GM12878 (cell line): ENCODE measurements at regions of chr2 and their contacts with region 1.

Region 1: GRCh38 chr2:215931256-215931903 is 82.0 kb downstream of the MREG start:
- DNase-seq: no peak
- ATAC-seq: peak; percentile 97
- H3K4me3 ChIP-seq: no peak overlapping the region
- H3K27ac ChIP-seq: no peak overlapping the region
- H3K4me1 ChIP-seq: peaks cover 4% of the 10 kb centered on the region; the same call in 1 of the 2 replicates
- H3K27me3 ChIP-seq: no peaks in the 10 kb centered on the region
- CTCF ChIP-seq: peak; percentile 82 to 96 (median 93)
- EP300 ChIP-seq: no peak
- POLR2A ChIP-seq: no peak
- RAD21 ChIP-seq: peak; percentile 96

Region 2: DNA sequence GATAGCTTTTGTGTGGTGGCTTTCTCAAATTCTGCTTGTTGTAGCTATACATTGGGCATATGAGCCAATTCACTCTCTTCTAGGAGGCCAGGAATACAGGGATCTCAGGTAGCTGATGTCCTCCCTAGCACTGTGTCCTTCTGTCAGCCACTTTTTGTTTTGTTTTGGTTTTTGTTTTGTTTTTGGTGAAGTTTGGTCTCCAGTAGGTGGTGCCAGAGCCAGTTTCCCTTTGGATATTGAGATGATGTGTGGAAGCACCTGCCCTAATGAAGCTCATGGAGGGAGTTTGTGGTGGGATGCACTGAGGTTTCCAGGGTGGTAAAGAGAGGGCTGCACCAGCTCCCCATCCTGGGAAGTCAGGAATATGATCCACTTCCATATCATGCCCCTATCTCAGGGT is 1621.1 kb before region 1 on chr2:
- CTCF ChIA-PET with region 1: no interaction called
- POLR2A ChIA-PET with region 1: no interaction called
- RAD21 ChIA-PET with region 1: no interaction called
- SMC1A ChIA-PET with region 1: no interaction called
- in situ Hi-C with region 1: loop called (anchors 25 kb)
- intact Hi-C with region 1: no loop called
- DNase-seq: no peak
- ATAC-seq: peak; percentile 75
- H3K4me3 ChIP-seq: no peak overlapping the region
- H3K27ac ChIP-seq: no peak overlapping the region
- H3K4me1 ChIP-seq: no peaks in the 10 kb centered on the region; the same call in 1 of the 2 replicates
- H3K27me3 ChIP-seq: no peaks in the 10 kb centered on the region
- CTCF ChIP-seq: peak; percentile 33 to 45 (median 35); a peak in 5 of 6 replicates
- EP300 ChIP-seq: no peak
- POLR2A ChIP-seq: no peak
- RAD21 ChIP-seq: peak; percentile 52

Region 3: DNA sequence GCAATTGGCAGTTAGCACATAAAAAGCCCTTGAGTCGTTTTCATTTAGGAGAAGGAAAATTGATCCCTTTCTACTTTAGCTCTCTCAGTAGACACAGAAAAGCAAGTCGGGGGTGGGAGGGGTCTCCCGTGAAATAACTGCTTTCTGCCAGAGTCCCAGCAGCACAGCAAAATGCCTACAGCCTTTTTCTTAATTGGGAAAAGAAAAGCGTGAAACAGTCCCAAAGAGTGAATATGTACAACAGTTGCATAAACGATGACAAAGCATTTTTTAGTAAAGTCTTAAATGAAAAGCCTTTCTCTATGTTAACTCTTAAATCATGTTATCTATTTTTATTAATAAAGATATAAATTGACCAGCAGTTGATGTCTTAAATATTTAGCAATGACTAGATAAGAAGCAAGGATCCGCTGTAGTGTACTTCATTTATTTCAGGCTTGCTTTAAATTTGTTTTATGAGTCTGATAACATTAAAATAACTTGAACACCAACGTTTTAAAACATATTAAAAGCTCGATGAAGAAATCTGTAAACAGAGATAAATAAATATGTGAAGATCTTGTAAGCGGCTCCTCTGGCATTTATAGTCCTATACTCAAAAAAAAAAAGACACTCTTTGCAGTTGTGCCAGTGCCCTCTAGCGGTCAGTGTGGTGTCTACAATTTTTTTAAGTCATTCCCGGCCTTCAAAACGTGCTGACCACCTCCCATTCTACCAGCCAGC is 661.8 kb before region 1 on chr2:
- CTCF ChIA-PET with region 1: interaction called, 11 read pairs
- POLR2A ChIA-PET with region 1: no interaction called
- RAD21 ChIA-PET with region 1: interaction called, 8 read pairs
- SMC1A ChIA-PET with region 1: interaction called, 23 read pairs
- in situ Hi-C with region 1: no loop called
- intact Hi-C with region 1: no loop called
- DNase-seq: peak; percentile 40
- ATAC-seq: peak; percentile 77
- H3K4me3 ChIP-seq: no peak overlapping the region
- H3K27ac ChIP-seq: no peak overlapping the region
- H3K4me1 ChIP-seq: peaks cover 4% of the 10 kb centered on the region; the same call in 1 of the 2 replicates
- H3K27me3 ChIP-seq: no peaks in the 10 kb centered on the region
- CTCF ChIP-seq: peak; percentile 69 to 73 (median 69)
- EP300 ChIP-seq: no peak
- POLR2A ChIP-seq: no peak
- RAD21 ChIP-seq: peak; percentile 81

Region 4: DNA sequence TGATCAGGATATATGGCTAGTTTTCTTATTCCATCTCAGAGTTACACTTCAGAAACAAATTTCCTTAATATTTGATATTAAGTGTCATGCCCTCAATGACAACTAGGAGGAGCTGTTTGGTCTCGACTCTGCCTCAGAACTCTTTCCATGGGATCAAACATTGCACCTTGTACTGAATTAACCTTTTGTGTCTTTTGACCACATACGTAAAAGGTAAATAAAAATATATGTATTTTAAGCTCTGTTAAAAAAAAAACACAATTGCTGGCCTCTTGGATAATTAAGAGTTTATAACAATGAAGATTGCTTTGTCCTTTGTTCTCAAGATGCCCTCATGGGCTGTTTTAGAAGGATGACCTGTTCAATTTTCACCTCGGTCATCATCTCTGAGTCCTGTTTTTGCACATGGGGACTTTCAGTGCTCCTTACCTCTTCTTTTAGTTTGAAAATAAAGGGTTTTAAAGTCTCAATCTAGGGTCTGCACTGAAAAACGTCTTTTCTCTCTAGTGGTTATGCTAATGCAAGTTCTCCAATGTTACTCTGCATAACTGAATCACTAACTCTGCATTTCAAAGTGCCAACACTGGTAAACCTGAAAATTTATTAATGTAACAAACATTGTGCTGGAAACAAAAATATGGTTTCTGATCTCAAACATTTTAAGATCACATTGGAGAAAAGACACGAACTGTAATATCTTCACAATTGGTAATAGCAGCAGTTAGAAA is 476.7 kb before region 1 on chr2:
- CTCF ChIA-PET with region 1: interaction called, 12 read pairs
- POLR2A ChIA-PET with region 1: no interaction called
- RAD21 ChIA-PET with region 1: no interaction called
- SMC1A ChIA-PET with region 1: interaction called, 4 read pairs
- in situ Hi-C with region 1: no loop called
- intact Hi-C with region 1: no loop called
- DNase-seq: no peak
- ATAC-seq: peak; percentile 67
- H3K4me3 ChIP-seq: no peak overlapping the region
- H3K27ac ChIP-seq: no peak overlapping the region
- H3K4me1 ChIP-seq: no peaks in the 10 kb centered on the region
- H3K27me3 ChIP-seq: no peaks in the 10 kb centered on the region
- CTCF ChIP-seq: peak; percentile 71 to 81 (median 71)
- EP300 ChIP-seq: no peak
- POLR2A ChIP-seq: no peak
- RAD21 ChIP-seq: peak; percentile 77

Region 5: DNA sequence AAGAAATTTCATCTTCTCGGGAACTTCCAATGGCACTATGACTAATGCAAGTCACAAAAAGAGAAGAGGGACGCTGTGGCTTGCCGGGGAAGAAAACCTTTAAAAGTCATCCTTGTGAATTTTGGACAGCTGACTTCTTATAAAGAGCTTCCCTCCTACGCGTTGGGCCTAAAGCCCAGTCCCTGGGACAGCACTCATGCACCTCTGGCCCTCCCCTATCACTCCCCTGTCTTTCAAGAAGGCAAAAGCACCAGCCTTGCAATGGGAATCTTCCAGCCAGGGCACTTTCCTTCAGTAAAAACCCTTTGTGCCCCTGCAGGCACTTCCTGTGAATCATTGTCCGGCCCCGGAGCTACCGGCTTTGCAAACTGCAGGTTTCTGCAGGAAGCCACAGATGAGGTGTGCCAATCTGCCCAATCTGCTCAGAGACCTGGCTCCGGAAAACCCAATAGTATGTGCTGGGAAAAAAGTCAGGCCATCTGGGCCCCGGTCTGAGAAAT is 74.8 kb after region 1 on chr2:
- CTCF ChIA-PET with region 1: interaction called, 11 read pairs
- POLR2A ChIA-PET with region 1: no interaction called
- RAD21 ChIA-PET with region 1: interaction called, 3 read pairs
- SMC1A ChIA-PET with region 1: no interaction called
- in situ Hi-C with region 1: no loop called
- intact Hi-C with region 1: no loop called
- DNase-seq: peak; percentile 73
- ATAC-seq: peak; percentile 40
- H3K4me3 ChIP-seq: peak overlapping the region; percentile 61
- H3K27ac ChIP-seq: peak overlapping the region; percentile 90
- H3K4me1 ChIP-seq: peaks cover 55% of the 10 kb centered on the region
- H3K27me3 ChIP-seq: no peaks in the 10 kb centered on the region
- CTCF ChIP-seq: no peak
- EP300 ChIP-seq: peak in 1 of 2 experiments; percentile 60; a peak in 2 of 4 replicates
- POLR2A ChIP-seq: peak; percentile 41; the same call in 1 of the 2 replicates
- RAD21 ChIP-seq: peak; percentile 3; the same call in 1 of the 2 replicates